ENCODE measurements at regions of chr2 and their contacts with region 1.

Region 1: DNA sequence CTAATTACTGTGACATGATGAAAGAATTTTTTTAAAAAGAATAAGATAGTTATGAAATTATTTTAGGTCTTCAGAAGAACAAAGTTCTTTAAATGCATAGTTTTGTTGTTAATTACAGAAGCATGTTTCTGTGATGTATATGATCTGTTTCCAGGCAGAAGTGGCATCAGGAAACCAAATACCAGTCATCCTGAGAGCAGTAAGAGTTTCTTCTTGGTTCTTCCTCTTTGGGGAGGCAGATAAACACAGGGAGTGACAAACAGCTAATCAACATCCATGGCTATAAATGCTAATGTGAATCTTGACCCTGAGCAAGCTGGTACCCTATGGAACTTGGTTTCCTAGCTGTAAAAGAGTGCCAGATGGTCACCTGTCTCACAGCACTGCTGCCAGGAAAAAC is 29.2 kb downstream of the WIPF1 start:
- DNase-seq: peak; percentile 34
- H3K4me3 Mint-ChIP-seq: no peak overlapping the region
- H3K27ac Mint-ChIP-seq: peak overlapping the region; percentile 81
- H3K4me1 Mint-ChIP-seq: peaks cover 62% of the 10 kb centered on the region
- H3K27me3 Mint-ChIP-seq: no peaks in the 10 kb centered on the region

Region 2: DNA sequence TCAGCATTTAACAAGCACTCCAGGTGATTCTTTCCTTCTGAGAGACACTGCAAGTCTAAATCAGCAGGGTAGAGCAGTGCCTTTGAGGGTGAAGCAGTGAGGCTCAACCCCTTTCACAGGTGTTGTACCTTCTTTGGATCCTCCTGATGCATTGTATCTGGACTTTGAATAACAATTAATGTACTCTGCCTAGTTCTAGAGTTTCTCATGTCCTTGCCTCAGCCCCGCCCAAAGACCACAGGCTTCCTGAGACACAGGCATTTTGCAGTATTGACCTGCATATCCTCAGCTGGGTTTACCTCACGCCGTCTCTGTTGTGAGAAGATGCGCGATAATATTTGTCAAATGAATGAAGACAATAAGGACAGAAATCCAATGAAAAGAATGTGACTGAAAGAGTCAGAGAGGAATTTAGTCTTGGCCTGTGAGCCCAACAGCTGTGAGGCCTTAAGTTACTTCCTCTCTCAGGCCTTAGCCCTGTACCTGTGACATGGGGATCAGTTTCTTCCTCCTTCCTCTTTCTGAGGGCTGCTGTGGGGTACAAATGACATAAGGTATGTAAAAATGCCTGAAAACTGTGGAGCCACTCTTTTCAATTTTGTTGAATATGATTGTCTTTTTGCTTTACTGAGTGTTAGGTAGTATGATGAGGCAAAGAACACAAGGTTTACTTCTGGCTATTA is 14.5 kb before region 1 on chr2:
- CTCF ChIA-PET with region 1: no interaction called
- intact Hi-C with region 1: loop called (anchors 2 kb)
- DNase-seq: no peak
- H3K4me3 Mint-ChIP-seq: no peak overlapping the region
- H3K27ac Mint-ChIP-seq: peak overlapping the region; percentile 75
- H3K4me1 Mint-ChIP-seq: peaks cover 43% of the 10 kb centered on the region
- H3K27me3 Mint-ChIP-seq: no peaks in the 10 kb centered on the region

Region 3: GRCh38 chr2:174593574-174594203 is 25.3 kb after region 1 on chr2:
- CTCF ChIA-PET with region 1: interaction called, 224 read pairs
- intact Hi-C with region 1: loop called (anchors 1 kb)
- DNase-seq: peak; percentile 87
- H3K4me3 Mint-ChIP-seq: peak overlapping the region; percentile 77
- H3K27ac Mint-ChIP-seq: peak overlapping the region; percentile 99
- H3K4me1 Mint-ChIP-seq: peaks cover 52% of the 10 kb centered on the region
- H3K27me3 Mint-ChIP-seq: no peaks in the 10 kb centered on the region

Region 4: DNA sequence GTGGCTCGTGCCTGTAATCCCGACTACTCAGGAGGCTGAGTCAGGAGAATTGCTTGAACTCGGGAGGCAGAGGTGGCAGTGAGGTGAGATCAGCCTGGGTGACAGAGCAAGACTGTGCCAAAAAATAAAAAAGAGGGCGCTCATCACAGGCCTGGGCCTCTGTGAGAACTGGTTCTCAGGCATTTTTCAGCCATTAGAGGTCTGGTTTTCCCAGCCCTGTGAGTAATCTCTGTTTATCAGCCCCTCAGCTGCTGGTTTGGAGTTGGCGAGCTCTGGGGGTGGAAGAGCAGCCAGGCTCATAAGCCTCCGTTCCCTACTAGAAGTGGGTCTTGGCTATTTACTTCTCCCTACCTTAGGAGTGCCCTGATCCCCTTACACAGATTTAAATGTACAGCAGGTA is 142.8 kb after region 1 on chr2:
- CTCF ChIA-PET with region 1: no interaction called
- intact Hi-C with region 1: no loop called
- DNase-seq: no peak
- H3K4me3 Mint-ChIP-seq: no peak overlapping the region
- H3K27ac Mint-ChIP-seq: no peak overlapping the region
- H3K4me1 Mint-ChIP-seq: no peaks in the 10 kb centered on the region
- H3K27me3 Mint-ChIP-seq: no peaks in the 10 kb centered on the region